ENCODE measurements at regions of chr17 and their contacts with region 1.

Region 1: GRCh38 chr17:45135192-45135977 is at the start of gene ACBD4:
- DNase-seq: peak; percentile 96
- ATAC-seq: peak; percentile 87 to 92
- H3K4me3 ChIP-seq: peak within 1 kb of the TSS; percentile 88
- H3K27ac ChIP-seq: peak within 1 kb of the TSS; percentile 80
- H3K4me1 ChIP-seq: peaks cover 28% of the 10 kb centered on the region
- H3K27me3 ChIP-seq: no peaks in the 10 kb centered on the region
- CTCF ChIP-seq: peak; percentile 100
- total RNA-seq, gene ACBD4: 16.6 TPM

Region 2: GRCh38 chr17:45197555-45198334 is 62.4 kb after region 1 on chr17:
- intact Hi-C with region 1: loop called (anchors 5 kb)
- DNase-seq: peak; percentile 95
- ATAC-seq: peak; percentile 99
- H3K4me3 ChIP-seq: peak overlapping the region; percentile 20
- H3K27ac ChIP-seq: peak overlapping the region; percentile 79
- H3K4me1 ChIP-seq: peaks cover 16% of the 10 kb centered on the region
- H3K27me3 ChIP-seq: no peaks in the 10 kb centered on the region
- CTCF ChIP-seq: peak; percentile 100

Region 3: GRCh38 chr17:45270828-45271418 is 135.5 kb after region 1 on chr17:
- intact Hi-C with region 1: no loop called
- DNase-seq: no peak
- ATAC-seq: peak; percentile 39 to 60
- H3K4me3 ChIP-seq: no peak overlapping the region
- H3K27ac ChIP-seq: no peak overlapping the region
- H3K4me1 ChIP-seq: no peaks in the 10 kb centered on the region
- H3K27me3 ChIP-seq: no peaks in the 10 kb centered on the region
- CTCF ChIP-seq: peak; percentile 59

Measured in lower lobe of right lung (tissue), 2 donors.